Psoas muscle (tissue), 8 donors: ENCODE measurements at regions of chr10 and their contacts with region 1.

Region 1: DNA sequence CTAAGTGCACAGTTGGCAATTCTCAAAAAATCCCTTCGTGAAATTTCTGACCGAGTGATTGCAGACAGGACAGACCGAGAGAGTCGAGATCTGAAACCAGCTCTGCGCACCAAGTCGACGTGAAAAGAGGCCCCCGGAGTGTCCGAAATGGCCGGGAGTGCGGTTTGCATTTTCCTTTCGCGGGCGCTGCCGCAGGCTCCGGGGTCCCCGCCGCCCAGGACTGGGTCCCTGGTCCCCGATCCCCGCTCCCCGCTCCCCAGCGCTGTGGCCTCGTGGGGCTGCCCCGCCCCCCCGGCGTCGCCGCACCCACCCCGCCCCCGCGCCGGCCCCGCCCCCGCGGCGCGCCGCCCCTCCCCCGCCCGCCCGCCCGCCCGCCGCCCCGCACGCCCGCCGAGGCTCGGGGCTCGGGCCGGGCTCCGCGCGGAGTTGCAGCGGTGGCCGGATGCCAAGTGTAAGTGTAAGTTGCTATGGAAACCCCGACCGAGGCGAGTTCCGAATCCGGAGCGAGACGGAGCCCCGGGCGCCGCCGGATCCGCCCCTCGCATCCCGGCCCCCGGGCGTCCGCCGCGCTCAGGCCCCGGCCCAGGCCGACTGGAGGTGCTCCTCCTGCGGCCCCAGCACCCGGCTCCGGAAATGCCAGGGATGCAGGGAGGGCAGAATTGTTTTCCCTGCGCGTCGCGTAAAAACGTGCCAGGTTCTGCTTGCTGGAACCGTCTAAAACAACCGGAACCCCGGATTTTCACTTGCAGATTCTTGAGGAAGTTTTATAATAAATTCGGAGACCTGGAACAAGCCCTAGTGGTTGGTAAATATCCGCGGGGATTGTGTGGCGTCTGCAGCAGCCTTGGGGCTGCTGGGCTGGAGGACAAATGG is 4.6 kb downstream of the BMI1 start:
- DNase-seq: peak; percentile 74 to 83
- ATAC-seq: no peak
- H3K4me3 ChIP-seq: peak overlapping the region; percentile 87
- H3K27ac ChIP-seq: peak overlapping the region; percentile 24
- H3K4me1 ChIP-seq: peaks cover 11% of the 10 kb centered on the region
- H3K27me3 ChIP-seq: no peaks in the 10 kb centered on the region
- CTCF ChIP-seq: no peak

Region 2: DNA sequence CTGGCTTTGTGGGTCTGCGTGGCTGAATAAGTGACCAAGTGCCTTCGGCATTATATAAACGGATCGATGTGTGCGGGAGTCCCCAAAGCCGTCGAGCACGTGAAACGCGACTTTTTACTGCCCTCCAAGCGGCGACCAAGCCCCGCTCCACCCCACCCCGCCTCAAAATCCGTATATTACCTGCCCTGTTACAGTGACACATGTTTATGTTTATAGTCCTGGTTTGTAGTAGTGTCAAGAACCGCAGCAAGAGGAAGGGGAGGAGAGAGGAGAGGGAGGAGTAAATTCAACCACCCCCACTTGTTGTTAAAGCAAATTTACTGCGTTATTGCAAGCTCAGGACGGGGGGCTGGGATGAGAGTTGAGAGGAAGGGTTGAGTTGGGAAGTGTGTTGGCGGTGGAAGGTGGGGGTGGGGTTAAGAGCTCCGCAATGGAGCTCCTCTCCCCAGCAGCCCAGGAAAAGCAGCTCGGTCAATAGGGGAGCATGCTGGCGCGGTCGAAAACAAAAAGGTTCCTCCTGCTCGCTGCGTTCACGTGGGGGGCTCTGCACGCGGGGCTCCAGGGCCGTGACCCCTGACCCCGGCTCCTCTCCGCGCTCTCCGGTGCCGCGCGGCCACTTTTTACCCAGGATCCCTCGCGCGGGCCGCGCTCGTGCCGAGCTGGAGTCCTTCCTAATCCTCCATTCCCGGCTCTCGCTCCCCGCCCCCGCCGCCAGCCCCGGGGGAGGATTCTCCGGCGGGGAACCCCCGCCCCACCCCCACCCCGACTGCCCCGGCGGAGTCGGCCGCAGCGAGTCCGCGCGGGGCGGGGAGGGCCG is 799.9 kb before region 1 on chr10 and contains the start of gene SKIDA1:
- intact Hi-C with region 1: loop called in 1 of 2 experiments (anchors 10 kb)
- DNase-seq: peak; percentile 90 to 94
- ATAC-seq: peak; percentile 86 to 91 (median 90)
- H3K4me3 ChIP-seq: peak within 1 kb of the TSS; percentile 84
- H3K27ac ChIP-seq: peak within 1 kb of the TSS; percentile 99
- H3K4me1 ChIP-seq: peaks cover 12% of the 10 kb centered on the region
- H3K27me3 ChIP-seq: no peaks in the 10 kb centered on the region
- CTCF ChIP-seq: no peak
- total RNA-seq, gene SKIDA1: 0.15 to 0.79 (median 0.35) TPM

Region 3: DNA sequence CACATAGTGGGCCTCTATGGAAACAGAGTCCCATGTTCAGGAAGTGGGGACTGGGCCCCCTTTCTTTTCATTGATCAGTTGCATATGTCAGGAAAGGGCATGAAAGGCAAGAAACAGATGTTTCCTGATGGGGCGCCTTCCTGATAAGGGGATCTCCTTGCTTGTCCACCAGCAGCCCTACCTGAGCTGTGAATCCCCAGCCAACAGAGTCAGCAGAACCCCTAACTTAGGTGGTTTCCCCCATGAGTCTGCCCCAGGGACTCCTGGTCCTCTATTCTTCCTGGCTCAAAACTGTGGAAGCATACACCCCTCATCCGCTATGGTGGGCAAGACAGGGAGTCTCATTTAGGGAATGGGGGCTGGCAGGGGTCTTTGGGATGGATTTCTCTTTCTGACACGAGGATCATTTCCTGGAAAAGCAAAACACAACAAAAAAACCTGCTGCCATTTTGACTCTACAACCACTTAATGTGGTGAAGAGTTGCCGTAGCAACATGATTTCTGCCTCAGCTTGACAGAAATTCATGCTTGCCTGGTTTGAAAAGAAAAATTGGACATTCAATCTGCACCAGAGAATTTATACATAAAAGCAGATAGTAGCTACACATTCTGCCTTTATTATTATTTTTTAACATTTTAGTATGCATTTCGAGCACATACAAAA is 139.6 kb after region 1 on chr10:
- intact Hi-C with region 1: no loop called
- DNase-seq: no peak
- ATAC-seq: no peak
- H3K4me3 ChIP-seq: no peak overlapping the region
- H3K27ac ChIP-seq: no peak overlapping the region
- H3K4me1 ChIP-seq: no peaks in the 10 kb centered on the region
- H3K27me3 ChIP-seq: no peaks in the 10 kb centered on the region
- CTCF ChIP-seq: no peak

Region 4: GRCh38 chr10:23095404-23095965 is 770.0 kb after region 1 on chr10 and contains the start of gene MSRB2:
- intact Hi-C with region 1: loop called in 1 of 2 experiments (anchors 10 kb)
- DNase-seq: peak; percentile 93 to 97
- ATAC-seq: peak; percentile 94 to 97 (median 96)
- H3K4me3 ChIP-seq: peak within 1 kb of the TSS; percentile 86
- H3K27ac ChIP-seq: peak within 1 kb of the TSS; percentile 85
- H3K4me1 ChIP-seq: peaks cover 30% of the 10 kb centered on the region
- H3K27me3 ChIP-seq: no peaks in the 10 kb centered on the region
- CTCF ChIP-seq: no peak
- total RNA-seq, gene MSRB2: 34.3 to 69.7 (median 54.7) TPM